ENCODE measurements at regions of chr11 and their contacts with region 1.

Region 1: DNA sequence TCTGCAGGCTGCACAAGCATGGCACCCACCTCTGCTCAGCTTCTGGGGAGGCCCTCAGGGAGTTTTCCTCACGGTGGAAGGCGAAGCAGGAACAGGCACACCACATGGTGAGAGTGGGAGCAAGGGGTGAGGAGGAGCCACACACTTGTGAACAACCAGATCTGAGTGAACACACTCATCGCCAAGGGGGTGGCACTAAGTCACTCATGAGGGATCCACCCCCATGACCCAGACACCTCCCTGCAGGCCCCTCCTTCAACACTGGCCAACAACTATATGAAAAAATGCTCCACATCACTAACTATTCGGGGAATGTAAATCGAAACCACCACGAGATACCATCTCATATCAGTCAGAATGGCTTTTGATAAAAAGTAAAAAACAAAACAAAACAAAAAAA is 722 bp upstream of the KRTAP5-2 start:
- DNase-seq: no peak
- H3K4me3 ChIP-seq: no peak overlapping the region
- H3K27ac ChIP-seq: no peak overlapping the region
- H3K27me3 ChIP-seq: peaks cover 30% of the 10 kb centered on the region
- CTCF ChIP-seq: no peak

Region 2: DNA sequence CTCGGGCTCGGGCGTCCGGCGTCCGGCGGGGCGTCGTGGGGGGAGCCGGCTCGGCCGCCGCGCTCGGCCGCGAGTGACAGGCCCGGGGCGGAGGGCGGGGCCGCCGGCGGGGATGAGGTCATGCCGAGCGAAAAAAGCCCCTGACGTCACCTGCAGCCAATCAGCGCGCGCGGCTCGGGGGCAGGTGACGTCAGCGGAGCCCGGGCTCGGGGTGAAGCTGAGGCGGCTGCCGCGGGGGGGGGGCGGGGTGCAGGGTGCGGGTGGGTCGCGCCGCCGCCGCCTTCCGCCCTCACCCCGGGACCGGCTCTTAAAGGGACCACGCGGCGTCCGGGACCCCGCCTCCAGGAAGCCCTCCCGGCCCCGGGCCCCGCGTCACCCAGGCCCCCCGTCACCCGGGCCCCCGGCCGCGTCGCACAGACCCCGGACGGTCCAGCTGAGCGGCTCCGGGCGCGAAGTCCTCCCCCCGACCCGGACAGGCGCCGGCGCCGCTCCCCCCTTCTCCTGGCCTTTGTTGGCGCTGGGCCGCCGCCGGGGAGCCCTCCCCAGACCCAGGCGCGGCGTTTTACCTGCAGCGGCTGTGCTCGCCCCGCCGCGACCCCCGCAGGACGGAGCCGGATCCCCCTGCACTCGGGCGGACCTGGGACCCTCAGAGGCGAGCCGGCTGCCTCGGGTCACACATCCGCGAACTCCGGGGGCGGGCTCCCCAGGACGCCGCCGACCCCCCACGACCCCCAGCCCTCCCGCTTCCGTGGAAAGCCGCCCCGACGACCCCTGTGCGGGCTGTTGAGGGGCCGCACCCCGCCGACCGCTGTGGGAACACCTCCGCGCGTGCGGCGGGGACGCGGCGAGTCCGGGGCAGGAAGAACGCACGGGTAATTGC is 26.4 kb before region 1 on chr11 and contains the start of gene DUSP8:
- CTCF ChIA-PET with region 1: interaction called, 16 read pairs
- POLR2A ChIA-PET with region 1: no interaction called
- DNase-seq: peak; percentile 48
- H3K4me3 ChIP-seq: peak within 1 kb of the TSS; percentile 61
- H3K27ac ChIP-seq: no peak within 1 kb of the TSS
- H3K27me3 ChIP-seq: peaks cover 25% of the 10 kb centered on the region
- CTCF ChIP-seq: no peak
- polyA plus RNA-seq, gene DUSP8: 1.5 and 2.1 TPM in 2 replicates

Region 3: DNA sequence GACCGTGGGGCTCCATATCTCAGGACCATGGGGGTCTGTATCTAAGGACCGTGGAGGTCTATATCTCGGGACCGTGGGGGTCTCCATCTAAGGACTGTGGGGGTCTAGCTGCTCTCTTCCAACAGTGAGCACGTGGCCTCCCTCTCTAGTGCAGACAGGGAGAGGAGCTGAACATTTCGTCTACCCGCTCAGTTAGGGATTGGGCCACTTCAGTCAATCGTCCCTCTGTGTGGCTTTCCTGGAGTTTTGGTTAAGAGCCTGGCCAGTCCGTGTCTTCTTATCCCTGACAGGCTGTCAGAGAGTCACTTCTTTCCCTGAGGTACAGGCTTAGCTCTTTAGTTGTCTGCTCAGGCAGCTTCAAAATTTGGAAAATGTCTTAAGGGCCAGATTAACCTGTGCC is 16.8 kb before region 1 on chr11:
- CTCF ChIA-PET with region 1: interaction called, 17 read pairs
- POLR2A ChIA-PET with region 1: no interaction called
- DNase-seq: no peak
- H3K4me3 ChIP-seq: no peak overlapping the region
- H3K27ac ChIP-seq: no peak overlapping the region
- H3K27me3 ChIP-seq: peaks cover 11% of the 10 kb centered on the region
- CTCF ChIP-seq: no peak

Region 4: GRCh38 chr11:1618231-1618630 is 19.4 kb after region 1 on chr11:
- CTCF ChIA-PET with region 1: interaction called, 15 read pairs
- POLR2A ChIA-PET with region 1: interaction called, 3 read pairs
- DNase-seq: no peak
- H3K4me3 ChIP-seq: no peak overlapping the region
- H3K27ac ChIP-seq: no peak overlapping the region
- H3K27me3 ChIP-seq: peaks cover 9% of the 10 kb centered on the region
- CTCF ChIP-seq: no peak

Region 5: DNA sequence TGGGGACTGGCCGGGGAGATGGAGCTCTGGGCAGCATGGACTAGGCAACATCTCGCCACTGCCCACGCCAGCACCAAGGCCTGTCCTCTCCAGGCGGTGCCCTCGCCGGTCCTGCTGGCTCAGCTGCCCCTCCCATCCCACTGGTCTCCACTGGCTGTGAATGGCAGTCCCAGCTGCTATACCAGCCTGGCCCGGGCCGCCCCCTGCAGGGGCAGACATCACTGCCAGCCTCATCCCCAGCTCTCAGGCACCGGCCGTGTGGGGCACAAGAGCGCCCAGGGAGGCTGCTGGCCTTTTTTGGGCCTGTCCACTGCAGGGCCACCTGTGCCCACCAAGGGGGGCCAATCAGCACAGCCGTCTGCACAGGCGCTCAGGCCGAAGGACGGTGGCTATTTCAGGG is 428.9 kb after region 1 on chr11:
- CTCF ChIA-PET with region 1: no interaction called
- POLR2A ChIA-PET with region 1: no interaction called
- DNase-seq: no peak
- H3K4me3 ChIP-seq: no peak overlapping the region
- H3K27ac ChIP-seq: no peak overlapping the region
- H3K27me3 ChIP-seq: no peaks in the 10 kb centered on the region
- CTCF ChIP-seq: no peak

Measured in AG04450 (cell line).